Activated T-helper 2 cell treated with anti-CD3 and anti-CD28 coated beads, Interferon-gamma antibody, Interleukin-2, Interleukin-4, amounts not matched to agents 10 μg/mL and 5 μg/mL and 100 μg/mL, durations not matched to agents 14 hours and 24 hours and 36 hours (primary cell): ENCODE measurements at regions of chr10 and their contacts with region 1.

Region 1: DNA sequence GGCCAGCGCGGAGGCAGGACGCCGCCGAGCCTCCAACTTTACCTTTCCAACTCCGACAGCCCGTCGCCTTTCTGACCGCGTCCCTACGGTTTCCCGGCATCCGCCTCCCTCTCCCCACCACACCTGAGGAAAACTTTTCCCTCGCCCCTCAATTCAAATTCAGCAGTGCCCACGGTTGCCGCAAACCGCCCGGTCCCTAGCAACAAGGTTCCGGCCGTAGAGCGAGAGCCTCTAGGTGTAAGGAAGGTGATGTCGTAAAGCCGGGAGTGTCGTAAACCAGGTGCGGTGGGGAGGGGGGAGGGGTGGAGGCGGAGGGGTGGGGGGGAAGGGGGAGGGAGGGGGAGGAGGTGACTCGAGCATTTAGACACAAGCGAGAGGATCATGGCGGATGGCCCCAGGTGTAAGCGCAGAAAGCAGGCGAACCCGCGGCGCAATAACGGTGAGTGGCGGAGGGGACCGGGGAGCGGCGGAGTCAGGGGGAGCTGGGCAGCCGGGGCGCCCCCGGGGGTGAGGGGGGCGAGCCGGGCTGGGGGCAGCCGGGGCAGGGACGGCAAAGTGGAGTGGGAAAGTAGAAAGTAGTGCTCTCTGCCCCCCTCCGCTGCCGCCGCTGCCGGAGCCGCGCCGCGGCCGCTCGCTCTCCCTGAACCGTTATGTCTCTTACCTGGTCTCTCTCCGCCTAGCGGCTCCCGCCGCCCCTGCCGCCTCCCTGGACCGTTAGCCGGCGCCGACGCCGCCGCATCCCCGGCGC is at the start of gene ZEB1:
- DNase-seq: peak; percentile 86
- H3K4me3 Mint-ChIP-seq: peak within 1 kb of the TSS; percentile 99
- H3K27ac Mint-ChIP-seq: peak within 1 kb of the TSS; percentile 100
- H3K4me1 Mint-ChIP-seq: peaks cover 42% of the 10 kb centered on the region
- H3K27me3 Mint-ChIP-seq: no peaks in the 10 kb centered on the region
- total RNA-seq, gene ZEB1: 68.6 and 70.0 TPM in 2 replicates

Region 2: DNA sequence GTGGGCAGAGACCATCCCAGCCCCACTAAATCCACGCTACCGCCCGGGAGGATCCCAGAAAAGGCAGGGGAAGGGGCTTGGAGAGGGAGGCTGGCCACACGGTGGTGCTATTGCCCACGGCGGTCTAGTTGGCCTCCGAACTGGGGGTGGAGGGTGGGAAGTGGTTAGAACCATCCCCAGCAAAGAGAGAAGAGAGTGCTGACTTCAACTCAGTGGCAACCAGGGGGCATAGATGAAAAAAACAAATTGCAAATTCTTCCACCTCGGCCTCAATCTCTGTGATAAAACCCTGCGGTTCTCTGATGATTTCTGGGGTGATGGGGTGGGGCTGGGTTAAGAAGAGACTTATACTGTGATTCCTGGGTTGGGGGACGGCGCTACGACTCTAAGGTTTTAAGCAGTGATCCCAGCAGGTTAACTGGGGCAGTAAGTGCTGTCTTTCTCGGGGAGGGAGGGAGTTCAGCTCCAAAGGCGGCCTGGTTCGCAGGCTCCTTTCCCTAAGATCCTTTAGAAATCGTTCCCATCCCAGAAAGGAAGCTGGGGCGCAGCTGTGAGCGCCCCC is 535.0 kb before region 1 on chr10:
- intact Hi-C with region 1: loop called (anchors 1 kb)
- DNase-seq: peak; percentile 74
- H3K4me3 Mint-ChIP-seq: peak overlapping the region; percentile 75
- H3K27ac Mint-ChIP-seq: peak overlapping the region; percentile 60
- H3K4me1 Mint-ChIP-seq: peaks cover 31% of the 10 kb centered on the region
- H3K27me3 Mint-ChIP-seq: peaks cover 5% of the 10 kb centered on the region

Region 3: DNA sequence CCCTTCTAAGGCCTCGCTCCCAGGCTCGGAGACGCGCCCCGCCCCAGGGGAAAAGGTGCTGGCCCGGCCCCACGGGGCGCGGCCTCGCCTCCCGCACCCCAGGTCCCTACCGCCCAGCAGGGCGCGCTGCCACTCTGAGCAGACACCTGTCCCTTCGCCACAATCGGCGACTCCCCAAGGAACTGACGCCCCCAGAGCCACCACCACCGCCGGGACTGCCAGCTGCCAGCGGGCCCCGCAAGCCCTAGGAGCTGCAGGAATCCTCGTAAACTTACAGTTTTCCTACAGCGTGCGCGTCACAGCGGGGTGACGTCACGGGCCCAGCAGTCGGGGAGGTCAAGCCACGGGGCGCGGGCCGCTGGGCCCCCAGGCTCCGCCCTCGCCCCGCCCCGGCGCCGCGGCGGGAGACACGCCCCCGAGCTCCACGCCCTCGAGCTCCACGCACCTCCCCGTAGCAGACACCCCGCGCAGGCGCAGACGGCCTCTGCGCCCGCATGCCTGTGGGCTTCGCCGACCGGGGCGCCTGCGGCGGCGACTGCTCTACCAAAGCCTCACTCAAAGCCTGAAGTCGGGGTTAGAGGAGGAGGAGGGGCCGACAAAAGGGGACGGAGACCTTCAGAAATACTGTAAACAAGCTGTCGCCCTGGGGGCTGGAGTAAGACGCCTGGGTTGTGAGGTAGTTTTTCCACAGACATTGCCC is 287.3 kb before region 1 on chr10 and contains the start of gene ZNF438:
- intact Hi-C with region 1: loop called (anchors 1 kb)
- DNase-seq: peak; percentile 94
- H3K4me3 Mint-ChIP-seq: peak within 1 kb of the TSS; percentile 86
- H3K27ac Mint-ChIP-seq: peak within 1 kb of the TSS; percentile 98
- H3K4me1 Mint-ChIP-seq: peaks cover 27% of the 10 kb centered on the region
- H3K27me3 Mint-ChIP-seq: no peaks in the 10 kb centered on the region
- total RNA-seq, gene ZNF438: 5.8 and 6.1 TPM in 2 replicates

Region 4: DNA sequence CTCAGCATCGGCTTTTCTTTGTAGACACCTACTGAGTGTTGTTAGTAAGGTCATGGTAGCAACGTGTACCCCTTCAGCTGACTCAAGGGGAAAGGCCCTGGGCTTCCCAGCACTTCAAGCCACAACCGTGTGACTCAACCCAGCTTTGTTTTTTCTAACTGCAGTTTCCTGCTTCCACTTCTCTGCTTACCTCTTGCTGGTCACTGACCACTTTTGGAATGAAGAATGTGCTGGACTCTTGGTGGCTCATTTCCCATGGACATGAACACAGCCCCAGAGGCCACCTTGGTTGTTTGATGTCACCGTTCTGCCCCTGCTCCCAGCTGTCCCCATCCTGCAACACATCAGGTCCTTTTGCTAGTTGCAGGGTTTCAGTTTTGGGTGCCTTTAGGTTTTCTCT is 217.9 kb before region 1 on chr10:
- intact Hi-C with region 1: loop called (anchors 5 kb)
- DNase-seq: peak; percentile 54
- H3K4me3 Mint-ChIP-seq: no peak overlapping the region
- H3K27ac Mint-ChIP-seq: peak overlapping the region; percentile 90
- H3K4me1 Mint-ChIP-seq: peaks cover 64% of the 10 kb centered on the region
- H3K27me3 Mint-ChIP-seq: no peaks in the 10 kb centered on the region

Region 5: GRCh38 chr10:31288962-31289361 is 30.1 kb before region 1 on chr10:
- intact Hi-C with region 1: no loop called
- DNase-seq: no peak
- H3K4me3 Mint-ChIP-seq: no peak overlapping the region
- H3K27ac Mint-ChIP-seq: no peak overlapping the region
- H3K4me1 Mint-ChIP-seq: peaks cover 2% of the 10 kb centered on the region
- H3K27me3 Mint-ChIP-seq: no peaks in the 10 kb centered on the region

Region 6: DNA sequence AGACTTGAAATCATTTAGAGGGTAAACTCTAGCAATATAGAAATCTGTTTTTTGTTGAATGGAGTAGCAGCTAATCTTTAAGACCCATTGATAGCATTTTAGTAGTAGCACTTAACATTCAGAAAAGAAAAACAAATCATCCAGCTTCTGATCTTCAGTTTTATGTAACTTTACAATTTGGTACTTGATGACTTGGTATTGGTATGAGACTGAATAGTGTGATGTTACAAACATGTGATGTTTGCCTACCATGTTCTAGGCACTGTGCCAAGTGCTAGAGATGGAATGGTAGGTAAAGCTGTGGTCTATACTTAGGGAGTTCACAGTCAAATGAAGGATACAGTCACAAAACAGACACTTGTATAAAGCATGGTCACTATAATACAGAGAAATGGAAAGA is 21.3 kb after region 1 on chr10:
- intact Hi-C with region 1: loop called (anchors 1 kb)
- DNase-seq: no peak
- H3K4me3 Mint-ChIP-seq: no peak overlapping the region
- H3K27ac Mint-ChIP-seq: no peak overlapping the region
- H3K4me1 Mint-ChIP-seq: peaks cover 23% of the 10 kb centered on the region
- H3K27me3 Mint-ChIP-seq: no peaks in the 10 kb centered on the region

Region 7: GRCh38 chr10:31359979-31360378 is 41.0 kb after region 1 on chr10:
- intact Hi-C with region 1: no loop called
- DNase-seq: no peak
- H3K4me3 Mint-ChIP-seq: no peak overlapping the region
- H3K27ac Mint-ChIP-seq: no peak overlapping the region
- H3K4me1 Mint-ChIP-seq: peaks cover 17% of the 10 kb centered on the region
- H3K27me3 Mint-ChIP-seq: no peaks in the 10 kb centered on the region

Region 8: GRCh38 chr10:31490858-31491504 is 172.0 kb after region 1 on chr10:
- intact Hi-C with region 1: loop called (anchors 5 kb)
- DNase-seq: no peak
- H3K4me3 Mint-ChIP-seq: no peak overlapping the region
- H3K27ac Mint-ChIP-seq: no peak overlapping the region
- H3K4me1 Mint-ChIP-seq: peaks cover 8% of the 10 kb centered on the region
- H3K27me3 Mint-ChIP-seq: no peaks in the 10 kb centered on the region